ENCODE measurements at regions of chr6 and their contacts with region 1.

Region 1: DNA sequence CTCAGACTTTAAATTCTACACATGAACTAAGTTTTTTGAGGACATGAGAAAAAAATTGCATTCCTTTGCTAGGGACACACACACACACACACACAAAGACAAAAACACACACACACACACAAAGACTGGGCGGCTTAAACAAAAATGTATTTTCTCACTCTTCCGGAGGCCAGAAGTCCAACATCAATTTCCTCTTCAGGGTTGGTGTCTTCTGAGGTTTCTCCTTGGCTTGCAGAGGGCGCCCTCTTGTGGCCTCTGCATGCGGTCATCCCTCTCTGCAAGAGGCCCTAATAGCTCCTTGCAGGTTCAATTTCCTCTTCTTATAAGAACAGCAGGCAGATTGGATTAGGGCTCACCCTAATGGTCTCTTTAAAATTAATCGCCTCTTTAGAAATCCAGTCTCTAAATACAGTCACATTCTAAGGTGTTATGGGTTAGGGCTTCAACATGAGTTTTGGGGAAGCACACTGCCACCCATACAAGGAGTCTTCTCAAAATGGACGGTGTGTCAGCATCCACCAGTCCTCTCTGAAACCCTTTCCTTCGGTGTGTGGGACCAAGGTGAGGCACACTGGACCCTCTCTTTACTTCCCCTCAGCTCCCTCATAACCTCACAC is 61.4 kb downstream of the GPR6 start:
- DNase-seq: peak; percentile 79
- H3K4me3 ChIP-seq: peak overlapping the region; percentile 38
- H3K27ac ChIP-seq: no peak overlapping the region
- H3K27me3 ChIP-seq: peaks cover under 1% of the 10 kb centered on the region
- CTCF ChIP-seq: peak; percentile 98

Region 2: GRCh38 chr6:109580519-109580918 is 459.0 kb before region 1 on chr6:
- CTCF ChIA-PET with region 1: interaction called, 13 read pairs
- POLR2A ChIA-PET with region 1: no interaction called
- DNase-seq: no peak
- H3K4me3 ChIP-seq: no peak overlapping the region
- H3K27ac ChIP-seq: no peak overlapping the region
- H3K27me3 ChIP-seq: no peaks in the 10 kb centered on the region
- CTCF ChIP-seq: no peak

Region 3: GRCh38 chr6:109690737-109691621 is 348.5 kb before region 1 on chr6 and contains the starts of genes AK9 and FIG4:
- CTCF ChIA-PET with region 1: interaction called, 45 read pairs
- POLR2A ChIA-PET with region 1: no interaction called
- DNase-seq: peak; percentile 72
- H3K4me3 ChIP-seq: peak within 1 kb of the TSS; percentile 88
- H3K27ac ChIP-seq: peak within 1 kb of the TSS; percentile 75
- H3K27me3 ChIP-seq: no peaks in the 10 kb centered on the region
- CTCF ChIP-seq: peak; percentile 42
- polyA plus RNA-seq, gene AK9: 2.6 and 3.6 TPM in 2 replicates
- polyA plus RNA-seq, gene FIG4: 17.0 and 22.8 TPM in 2 replicates

Region 4: GRCh38 chr6:109718991-109719390 is 320.5 kb before region 1 on chr6:
- CTCF ChIA-PET with region 1: interaction called, 70 read pairs
- POLR2A ChIA-PET with region 1: no interaction called
- DNase-seq: no peak
- H3K4me3 ChIP-seq: no peak overlapping the region
- H3K27ac ChIP-seq: no peak overlapping the region
- H3K27me3 ChIP-seq: no peaks in the 10 kb centered on the region
- CTCF ChIP-seq: no peak

Region 5: GRCh38 chr6:110029144-110029543 is 10.3 kb before region 1 on chr6:
- CTCF ChIA-PET with region 1: interaction called, 48 read pairs
- POLR2A ChIA-PET with region 1: no interaction called
- DNase-seq: no peak
- H3K4me3 ChIP-seq: no peak overlapping the region
- H3K27ac ChIP-seq: no peak overlapping the region
- H3K27me3 ChIP-seq: peaks cover 7% of the 10 kb centered on the region
- CTCF ChIP-seq: no peak